Ascending aorta (tissue), 2 donors: ENCODE measurements at regions of chr3 and their contacts with region 1.

Region 1: GRCh38 chr3:115147329-115148141 is 447 bp upstream of the ZBTB20 start:
- DNase-seq: peak; percentile 98 to 99
- H3K4me3 ChIP-seq: peak overlapping the region; percentile 87 to 94
- H3K27ac ChIP-seq: peak overlapping the region; percentile 94 to 98
- H3K4me1 ChIP-seq: peaks cover 0 to 16% of the 10 kb centered on the region in 2 donors
- H3K27me3 ChIP-seq: no peaks in the 10 kb centered on the region
- CTCF ChIP-seq: no peak

Region 2: GRCh38 chr3:113696658-113697499 is 1450.7 kb before region 1 on chr3:
- intact Hi-C with region 1: loop called (anchors 2 kb)
- DNase-seq: peak; percentile 98 to 100
- H3K4me3 ChIP-seq: peak overlapping the region; percentile 93 to 98
- H3K27ac ChIP-seq: peak overlapping the region; percentile 98 to 99
- H3K4me1 ChIP-seq: peaks cover 0 to 17% of the 10 kb centered on the region in 2 donors
- H3K27me3 ChIP-seq: no peaks in the 10 kb centered on the region
- CTCF ChIP-seq: peak in 1 of 3 experiments; percentile 22

Region 3: GRCh38 chr3:113947372-113948014 is 1200.0 kb before region 1 on chr3 and contains the start of gene ZDHHC23:
- intact Hi-C with region 1: loop called (anchors 5 kb)
- DNase-seq: peak in 1 of 2 donors; percentile 85
- H3K4me3 ChIP-seq: peak within 1 kb of the TSS; percentile 70 to 82
- H3K27ac ChIP-seq: peak within 1 kb of the TSS; percentile 60 to 68
- H3K4me1 ChIP-seq: no peaks in the 10 kb centered on the region
- H3K27me3 ChIP-seq: no peaks in the 10 kb centered on the region
- CTCF ChIP-seq: no peak
- total RNA-seq, gene ZDHHC23: 4.4 TPM

Region 4: DNA sequence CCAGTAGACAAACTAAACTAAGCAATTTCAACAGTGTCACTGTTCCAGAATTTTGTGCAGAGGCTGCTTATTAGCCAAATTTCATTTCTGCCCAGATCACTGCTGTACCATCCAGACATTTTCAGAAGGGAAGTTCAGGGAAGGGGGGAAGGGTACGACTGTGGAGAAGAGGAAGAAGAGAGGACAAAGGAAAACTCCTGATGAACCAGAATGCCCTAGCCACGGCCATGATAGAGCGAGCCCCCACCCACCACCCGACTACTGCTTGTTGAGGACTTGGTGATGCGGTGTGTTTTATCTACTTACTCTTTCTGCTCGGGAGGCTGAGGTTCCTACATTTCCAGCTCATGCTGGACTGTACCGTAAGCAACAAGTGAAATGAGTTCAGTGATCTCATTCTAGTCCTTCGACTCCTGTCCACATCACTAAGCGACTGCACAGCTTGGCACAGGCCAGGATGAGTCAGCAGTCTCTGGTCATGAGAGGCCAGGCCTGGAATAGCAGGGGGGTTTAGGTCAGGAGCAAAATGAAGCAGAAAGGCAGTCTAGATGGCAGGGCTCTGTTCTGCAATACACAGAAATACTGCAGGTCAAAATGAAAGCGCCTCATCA is 522.9 kb before region 1 on chr3:
- intact Hi-C with region 1: loop called (anchors 1 kb)
- DNase-seq: peak; percentile 96 to 97
- H3K4me3 ChIP-seq: peak overlapping the region; percentile 56 to 62
- H3K27ac ChIP-seq: peak overlapping the region; percentile 86 to 94
- H3K4me1 ChIP-seq: peaks cover 0 to 14% of the 10 kb centered on the region in 2 donors
- H3K27me3 ChIP-seq: no peaks in the 10 kb centered on the region
- CTCF ChIP-seq: no peak

Region 5: DNA sequence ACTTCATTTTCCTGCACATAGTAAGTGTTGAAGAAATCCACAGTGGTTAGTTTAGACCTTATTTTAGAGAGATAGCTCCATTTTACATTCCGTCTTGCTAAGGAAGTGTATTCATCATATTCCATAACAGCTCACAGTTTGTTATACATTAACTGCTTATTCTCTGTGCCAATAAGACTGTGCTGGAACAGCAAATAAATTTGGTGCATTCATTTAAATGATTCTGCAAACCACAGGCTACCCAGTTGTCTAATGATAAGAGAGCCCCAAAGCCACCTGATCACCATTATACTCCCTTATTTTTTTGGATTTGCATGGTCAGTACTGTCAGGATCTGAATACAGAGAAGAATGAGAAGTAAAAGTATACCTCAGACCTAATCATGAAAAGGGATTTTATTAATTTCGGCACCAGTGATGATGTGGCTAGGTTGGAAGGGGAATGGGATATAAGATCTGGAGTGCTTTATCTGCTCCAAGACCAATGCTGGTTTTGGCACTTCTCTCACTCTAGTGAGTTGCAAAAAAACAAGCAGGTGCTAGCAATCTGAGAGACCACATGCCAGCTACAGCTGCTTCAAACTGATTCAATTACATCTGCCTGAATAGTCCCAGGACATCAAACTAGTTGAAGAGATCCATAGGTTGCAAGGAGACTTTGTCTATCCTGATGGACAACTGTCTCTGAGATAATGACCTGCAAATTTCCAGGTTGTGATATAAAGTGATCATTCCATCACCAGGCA is 255.2 kb before region 1 on chr3:
- intact Hi-C with region 1: no loop called
- DNase-seq: no peak
- H3K4me3 ChIP-seq: no peak overlapping the region
- H3K27ac ChIP-seq: no peak overlapping the region
- H3K4me1 ChIP-seq: peaks cover 0 to 3% of the 10 kb centered on the region in 2 donors
- H3K27me3 ChIP-seq: no peaks in the 10 kb centered on the region
- CTCF ChIP-seq: no peak

Region 6: DNA sequence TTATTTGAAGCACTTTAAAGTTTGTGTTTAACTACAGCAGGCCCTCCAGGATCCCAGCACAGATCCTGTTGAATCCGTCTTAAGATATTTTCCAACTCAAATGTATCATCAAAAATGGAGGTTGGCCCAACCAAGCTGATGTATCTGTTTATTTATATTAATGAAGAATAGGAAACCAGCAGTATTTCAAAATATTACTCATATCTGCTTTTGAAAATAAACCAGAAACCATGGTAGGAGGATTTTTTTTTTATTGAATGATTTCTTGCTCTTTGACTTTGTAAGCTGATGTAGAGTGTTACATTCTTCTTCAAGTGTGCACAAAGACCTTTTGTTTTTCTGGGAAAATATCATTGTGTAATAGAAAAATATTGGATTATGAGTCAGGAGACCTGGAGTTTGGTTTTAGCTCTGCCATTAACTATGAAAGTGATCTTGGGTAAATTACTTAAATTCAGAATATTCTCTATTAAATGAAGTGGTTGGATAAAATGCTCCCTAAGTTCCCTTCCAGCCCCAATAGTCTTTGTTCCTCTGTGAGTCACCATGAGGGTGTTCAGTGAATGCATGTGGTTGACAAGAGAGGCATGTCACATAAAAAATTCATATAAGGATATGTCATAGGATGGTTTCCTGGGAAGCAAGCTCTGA is 254.4 kb after region 1 on chr3:
- intact Hi-C with region 1: loop called (anchors 1 kb)
- DNase-seq: no peak
- H3K4me3 ChIP-seq: no peak overlapping the region
- H3K27ac ChIP-seq: peak overlapping the region; percentile 80 to 85
- H3K4me1 ChIP-seq: peaks cover 0 to 6% of the 10 kb centered on the region in 2 donors
- H3K27me3 ChIP-seq: no peaks in the 10 kb centered on the region
- CTCF ChIP-seq: no peak

Region 7: DNA sequence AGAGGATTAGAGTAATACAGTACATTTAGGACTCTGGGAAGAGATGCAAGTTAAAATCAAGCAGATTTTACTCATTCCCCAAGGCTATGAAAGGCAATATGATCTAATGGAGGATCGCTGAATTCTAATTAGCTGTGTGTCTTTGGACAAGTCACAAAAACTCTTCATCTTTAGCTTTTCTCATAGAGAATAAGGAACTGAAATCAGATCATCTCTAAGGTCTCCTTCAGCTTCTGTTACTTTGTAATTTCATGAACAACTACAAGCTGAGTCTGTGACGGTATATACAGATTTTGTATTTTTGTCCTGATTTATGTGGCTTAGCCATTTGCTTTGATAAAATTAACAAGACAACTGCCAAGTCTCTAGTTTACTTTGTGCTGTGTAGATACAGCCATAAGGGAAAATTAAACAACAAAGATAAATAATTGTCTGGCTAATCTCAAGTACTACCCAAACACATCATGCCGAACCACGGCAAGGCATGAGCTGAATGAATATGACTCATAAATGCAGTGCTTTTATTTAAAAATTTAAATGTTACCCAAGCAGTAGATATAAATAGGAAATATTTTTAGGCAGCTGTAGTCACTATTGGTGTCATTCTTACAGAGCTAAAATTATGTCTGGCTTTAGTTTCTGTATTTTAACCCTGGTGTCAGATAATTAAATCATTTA is 557.3 kb after region 1 on chr3:
- intact Hi-C with region 1: loop called (anchors 5 kb)
- DNase-seq: no peak
- H3K4me3 ChIP-seq: no peak overlapping the region
- H3K27ac ChIP-seq: peak overlapping the region; percentile 41 to 62
- H3K4me1 ChIP-seq: peaks cover 0 to 5% of the 10 kb centered on the region in 2 donors
- H3K27me3 ChIP-seq: no peaks in the 10 kb centered on the region
- CTCF ChIP-seq: no peak

Region 8: DNA sequence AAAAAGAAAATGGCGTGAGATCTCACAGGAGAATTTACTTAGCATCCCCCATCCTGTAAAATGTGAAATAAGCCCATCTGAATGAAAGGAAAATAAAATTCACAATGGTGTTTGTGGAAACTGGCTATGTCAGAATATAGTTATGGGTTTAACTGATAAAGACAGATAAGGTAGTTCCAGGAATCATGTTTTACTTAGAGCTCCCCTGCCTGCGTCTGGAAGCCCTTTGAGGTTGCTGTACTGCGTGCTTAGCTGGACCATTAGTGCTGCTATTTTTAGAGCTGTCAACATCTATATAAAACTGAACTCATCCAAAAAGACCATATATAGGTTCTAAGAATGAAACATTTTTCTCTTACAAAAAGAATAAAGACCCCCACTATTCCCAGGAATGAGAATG is 1166.9 kb after region 1 on chr3:
- intact Hi-C with region 1: no loop called
- DNase-seq: no peak
- H3K4me3 ChIP-seq: no peak overlapping the region
- H3K27ac ChIP-seq: no peak overlapping the region
- H3K4me1 ChIP-seq: no peaks in the 10 kb centered on the region
- H3K27me3 ChIP-seq: no peaks in the 10 kb centered on the region
- CTCF ChIP-seq: no peak